ENCODE measurements at regions of chr14 and their contacts with region 1.

Region 1: DNA sequence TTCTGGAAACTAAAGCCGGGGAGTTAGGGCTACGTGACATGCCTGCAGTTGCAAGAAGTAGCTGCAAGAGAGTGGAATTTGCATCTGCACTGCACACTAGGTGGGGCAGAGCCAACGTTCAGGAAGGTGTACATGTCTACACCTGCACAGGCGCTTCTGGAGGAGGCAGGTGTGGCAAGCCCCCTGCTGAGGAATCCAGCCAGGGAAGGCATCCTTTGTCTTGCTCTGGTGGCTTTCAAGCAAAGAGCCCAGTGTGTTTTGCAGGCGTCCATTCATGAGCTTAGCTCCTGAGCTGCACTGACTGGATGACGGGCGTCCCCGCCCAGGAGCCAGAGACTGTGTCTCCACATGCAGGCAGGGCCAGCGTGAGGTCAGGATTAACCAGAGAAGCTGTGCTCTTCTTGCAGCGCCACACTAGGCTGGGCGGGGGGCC is 116.3 kb downstream of the ZFP36L1 start:
- DNase-seq: peak; percentile 76
- H3K4me3 ChIP-seq: no peak overlapping the region
- H3K27ac ChIP-seq: peak overlapping the region in 1 of 2 donors; percentile 43
- H3K4me1 ChIP-seq: peaks cover 7% of the 10 kb centered on the region
- H3K27me3 ChIP-seq: no peaks in the 10 kb centered on the region
- CTCF ChIP-seq: peak in 1 of 4 experiments; percentile 19
- POLR2A ChIP-seq: no peak

Region 2: GRCh38 chr14:68780358-68781160 is 104.0 kb after region 1 on chr14:
- intact Hi-C with region 1: loop called (anchors 5 kb)
- DNase-seq: no peak
- H3K4me3 ChIP-seq: no peak overlapping the region
- H3K27ac ChIP-seq: peak overlapping the region; percentile 54 to 66
- H3K4me1 ChIP-seq: peaks cover 19% of the 10 kb centered on the region
- H3K27me3 ChIP-seq: no peaks in the 10 kb centered on the region
- CTCF ChIP-seq: no peak
- POLR2A ChIP-seq: no peak

Region 3: DNA sequence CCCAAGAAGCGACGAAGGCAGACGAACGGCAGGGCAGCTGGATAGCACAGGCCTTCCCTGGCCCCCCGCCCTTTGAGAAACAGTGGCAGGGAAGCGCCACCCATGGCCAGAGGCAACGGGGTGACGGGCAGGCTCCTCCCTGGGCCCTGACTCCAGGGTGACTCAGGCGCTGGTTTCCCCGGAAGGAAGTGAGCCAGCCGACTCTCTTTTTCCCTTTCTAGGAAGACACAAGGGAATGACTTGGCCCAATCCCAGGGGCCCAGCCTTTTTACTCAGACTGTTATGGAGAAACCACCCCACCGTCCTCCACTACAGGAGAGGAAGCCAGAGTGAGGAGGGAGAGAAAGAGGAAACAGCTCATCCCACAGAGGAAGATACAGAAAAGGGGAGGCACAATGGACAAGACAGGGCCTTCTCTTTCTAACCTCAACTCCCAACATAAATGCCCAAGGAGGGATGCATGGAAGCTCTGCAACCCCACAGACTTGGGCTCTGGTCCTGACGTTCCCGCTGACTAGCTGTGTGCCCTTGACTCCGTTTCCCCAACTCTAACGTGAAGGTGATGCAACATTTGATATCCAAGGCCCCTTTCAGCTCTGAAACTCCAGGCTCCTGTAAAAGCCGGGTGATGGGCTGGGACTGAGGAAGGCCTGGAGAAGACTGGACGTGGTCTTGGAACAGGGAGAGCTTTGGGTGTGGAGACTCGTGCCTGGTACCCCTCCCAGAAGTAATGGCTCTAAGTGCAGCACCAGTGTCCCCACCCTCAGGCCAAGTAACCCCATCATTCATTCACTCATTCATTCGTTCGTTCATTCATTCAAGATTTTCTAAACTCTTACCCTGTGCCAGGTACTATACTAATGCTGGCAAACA is 274.8 kb after region 1 on chr14:
- intact Hi-C with region 1: no loop called
- DNase-seq: peak; percentile 63
- H3K4me3 ChIP-seq: no peak overlapping the region
- H3K27ac ChIP-seq: peak overlapping the region; percentile 79 to 98
- H3K4me1 ChIP-seq: peaks cover 10% of the 10 kb centered on the region
- H3K27me3 ChIP-seq: no peaks in the 10 kb centered on the region
- CTCF ChIP-seq: no peak
- POLR2A ChIP-seq: no peak

Measured in prostate gland (tissue), 2 donors.